ENCODE measurements at regions of chr3 and their contacts with region 1.

Region 1: GRCh38 chr3:56997675-56998074 is 62.8 kb upstream of the SPATA12 start:
- DNase-seq: no peak
- H3K4me3 ChIP-seq: no peak overlapping the region
- H3K27ac ChIP-seq: peak overlapping the region; percentile 26 to 29
- H3K4me1 ChIP-seq: peaks cover 7% of the 10 kb centered on the region
- H3K27me3 ChIP-seq: no peaks in the 10 kb centered on the region
- CTCF ChIP-seq: no peak
- POLR2A ChIP-seq: no peak

Region 2: DNA sequence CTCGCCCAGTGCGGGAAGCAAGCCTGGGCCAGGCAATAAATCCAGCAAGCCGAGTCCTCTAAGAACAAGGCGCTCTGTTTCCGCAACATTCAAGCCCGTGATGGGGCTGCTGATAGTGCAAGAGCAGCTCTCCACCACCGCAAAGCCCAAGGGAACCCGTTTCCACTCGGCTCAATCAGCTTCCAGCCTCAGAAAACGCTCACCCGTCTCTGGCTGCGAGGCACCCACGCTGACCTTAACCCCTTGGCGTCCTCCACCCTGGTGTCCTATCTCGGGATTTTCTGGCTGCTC is 80.6 kb after region 1 on chr3:
- intact Hi-C with region 1: loop called (anchors 2 kb)
- DNase-seq: peak; percentile 59
- H3K4me3 ChIP-seq: peak overlapping the region; percentile 60 to 66
- H3K27ac ChIP-seq: peak overlapping the region; percentile 31 to 77
- H3K4me1 ChIP-seq: peaks cover 2% of the 10 kb centered on the region
- H3K27me3 ChIP-seq: no peaks in the 10 kb centered on the region
- CTCF ChIP-seq: no peak
- POLR2A ChIP-seq: no peak

Region 3: GRCh38 chr3:57199895-57200297 is 202.2 kb after region 1 on chr3 and contains the start of gene HESX1:
- intact Hi-C with region 1: no loop called
- DNase-seq: no peak
- H3K4me3 ChIP-seq: no peak within 1 kb of the TSS
- H3K27ac ChIP-seq: no peak within 1 kb of the TSS
- H3K4me1 ChIP-seq: no peaks in the 10 kb centered on the region
- H3K27me3 ChIP-seq: no peaks in the 10 kb centered on the region
- CTCF ChIP-seq: no peak
- POLR2A ChIP-seq: no peak
- total RNA-seq, gene HESX1: 0.23 to 3.6 TPM

Region 4: DNA sequence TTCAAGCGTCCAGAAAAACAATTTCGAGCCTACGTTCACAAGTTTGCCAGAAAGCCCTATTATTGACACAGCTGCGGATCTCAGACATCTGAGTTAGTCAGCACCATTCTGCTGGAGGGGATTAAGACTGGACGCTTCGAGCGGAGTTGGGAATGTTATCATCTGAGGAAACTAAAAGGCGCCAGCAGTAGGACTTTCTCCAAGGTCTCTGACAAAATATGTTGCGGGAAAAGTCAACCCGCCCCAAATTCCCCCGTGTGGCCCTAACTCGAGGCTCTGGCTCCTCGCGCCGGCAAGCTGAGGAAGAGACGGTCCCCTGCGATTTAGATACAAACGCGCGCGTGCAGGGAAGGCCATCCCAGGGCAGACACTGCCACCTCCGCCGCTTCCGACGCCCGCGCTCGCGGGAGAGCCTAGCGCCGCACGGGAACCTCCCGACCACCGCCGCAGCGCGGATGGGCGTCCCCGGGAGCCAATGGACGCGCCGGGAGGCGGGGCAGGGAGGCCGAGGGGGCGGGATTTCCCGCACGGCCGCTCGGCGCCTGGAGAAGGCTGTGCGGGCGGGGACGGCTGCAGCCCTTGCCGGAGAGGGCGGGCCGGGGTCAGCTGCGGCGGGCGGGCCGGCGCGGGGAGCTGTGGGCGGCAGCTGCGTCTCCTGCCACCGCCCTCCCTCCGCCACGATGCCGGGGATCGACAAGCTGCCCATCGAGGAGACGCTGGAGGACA is 229.7 kb after region 1 on chr3 and contains the start of gene APPL1:
- intact Hi-C with region 1: loop called (anchors 5 kb)
- DNase-seq: peak; percentile 91
- H3K4me3 ChIP-seq: peak within 1 kb of the TSS; percentile 82 to 83
- H3K27ac ChIP-seq: peak within 1 kb of the TSS; percentile 88 to 93
- H3K4me1 ChIP-seq: peaks cover 3% of the 10 kb centered on the region
- H3K27me3 ChIP-seq: no peaks in the 10 kb centered on the region
- CTCF ChIP-seq: peak in 1 of 4 experiments; percentile 25
- POLR2A ChIP-seq: peak; percentile 81
- total RNA-seq, gene APPL1: 32.3 to 47.3 TPM

Measured in prostate gland (tissue), 2 donors.